Left cardiac atrium (tissue), 4 donors: ENCODE measurements at regions of chr19 and their contacts with region 1.

Region 1: DNA sequence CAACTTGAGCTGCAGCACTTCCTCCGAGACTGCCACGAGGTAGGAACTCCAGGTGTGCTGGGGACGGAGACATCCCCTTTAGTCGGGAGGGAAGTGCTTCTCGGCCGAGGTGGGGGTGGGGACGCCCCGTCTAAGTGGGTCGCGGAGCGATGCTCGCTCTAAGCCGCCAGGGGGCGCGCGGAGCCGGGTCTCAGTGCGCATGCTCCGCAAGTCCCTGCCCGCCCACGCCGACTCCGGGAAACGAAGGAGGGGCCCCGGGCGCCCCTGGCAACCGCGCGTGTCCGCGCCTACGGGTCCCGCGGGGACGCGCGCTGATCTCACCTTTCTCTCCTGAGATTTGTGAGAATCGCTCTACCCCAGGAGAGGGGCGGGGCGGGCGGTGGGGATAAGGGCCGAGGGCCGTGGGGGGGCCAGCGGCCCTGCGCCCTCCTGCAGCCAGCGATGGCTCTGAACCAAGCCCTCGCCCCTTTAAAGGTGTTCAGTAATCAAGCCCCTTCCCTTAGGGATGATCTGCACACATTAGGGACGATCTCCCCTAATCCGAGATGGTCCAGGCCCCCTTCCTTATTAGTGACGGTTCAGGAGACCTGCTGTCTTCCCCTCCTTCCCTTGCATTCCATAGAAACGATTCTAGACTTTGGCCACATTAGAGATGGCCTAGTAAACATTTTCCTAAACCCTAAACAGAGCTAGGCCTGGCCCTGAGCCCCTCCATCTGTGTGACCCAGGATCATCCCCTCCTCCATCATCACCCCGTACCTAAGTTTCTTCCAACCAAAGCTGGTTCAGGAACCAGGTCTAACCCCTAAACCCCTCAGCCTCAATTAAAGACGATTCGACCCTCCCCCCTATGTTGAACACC is 47.3 kb upstream of the SHKBP1 start:
- DNase-seq: peak; percentile 88
- ATAC-seq: peak; percentile 91 to 92

Region 2: DNA sequence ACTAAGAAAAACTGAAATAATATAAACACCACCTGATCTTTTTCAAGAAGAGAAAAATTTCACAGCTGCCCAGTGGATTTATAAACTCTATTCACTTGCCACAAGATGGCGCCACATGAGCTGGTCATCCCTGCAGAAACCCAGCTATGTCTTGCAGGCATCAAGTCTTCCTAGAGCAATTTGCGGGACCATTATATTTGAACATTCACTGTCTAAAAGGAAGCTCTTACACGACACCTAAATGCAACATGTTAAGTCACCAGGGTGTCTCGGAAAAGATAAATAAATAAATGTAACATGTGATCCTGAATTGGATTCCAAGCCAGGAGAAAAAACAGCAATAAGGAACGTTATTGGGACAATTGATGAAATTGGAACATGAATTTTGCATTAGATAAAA is 223.9 kb before region 1 on chr19:
- intact Hi-C with region 1: loop called in 1 of 2 experiments (anchors 10 kb)
- DNase-seq: peak; percentile 76
- ATAC-seq: peak; percentile 76 to 84

Region 3: GRCh38 chr19:40633207-40633606 is 103.9 kb after region 1 on chr19:
- intact Hi-C with region 1: loop called in 1 of 2 experiments (anchors 10 kb)
- DNase-seq: no peak
- ATAC-seq: no peak